Caco-2 (cell line): ENCODE measurements at regions of chr16 and their contacts with region 1.

Region 1: DNA sequence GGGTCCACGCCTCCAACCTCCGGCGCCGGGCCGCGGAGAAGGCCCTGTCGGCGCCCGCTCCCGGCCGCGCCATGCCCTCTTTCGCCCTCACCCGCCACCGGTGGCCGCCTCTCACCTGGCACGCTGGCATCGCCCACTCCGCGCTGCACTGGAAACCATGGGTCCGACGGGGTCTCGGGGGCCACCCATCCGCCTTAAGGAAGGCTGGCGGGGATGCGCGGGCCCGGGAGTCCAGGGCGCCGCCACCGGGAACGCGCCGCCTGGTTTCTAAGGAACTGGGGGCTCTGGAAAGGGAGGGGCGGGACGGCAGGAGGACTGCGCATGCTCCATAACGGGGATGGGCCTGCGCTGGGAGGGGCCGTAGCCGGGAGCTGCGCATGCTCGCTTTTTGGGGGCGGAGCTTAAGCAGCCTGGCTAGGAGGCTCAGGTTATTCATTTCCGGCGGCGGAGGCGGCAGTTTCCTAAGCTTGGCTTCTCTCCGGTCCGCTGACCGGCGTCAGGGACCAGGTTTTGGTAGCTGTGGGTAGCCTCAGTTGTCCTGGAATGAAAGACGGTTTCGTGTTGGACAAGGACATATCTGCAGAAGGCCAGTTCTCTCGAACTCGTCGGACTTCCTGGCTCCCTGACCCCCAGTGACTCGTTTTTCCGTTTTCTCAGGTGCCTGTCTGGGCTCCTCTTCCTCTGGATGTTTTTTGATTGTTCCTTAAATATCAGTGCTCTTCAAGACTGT is at the start of gene GFOD2:
- DNase-seq: peak; percentile 97 to 99
- H3K4me3 ChIP-seq: peak within 1 kb of the TSS; percentile 84
- H3K4me3 Mint-ChIP-seq: peak within 1 kb of the TSS; percentile 89
- H3K27ac Mint-ChIP-seq: peak within 1 kb of the TSS; percentile 86
- H3K4me1 ChIP-seq: peaks cover 25% of the 10 kb centered on the region
- H3K4me1 Mint-ChIP-seq: peaks cover 20% of the 10 kb centered on the region
- H3K27me3 ChIP-seq: no peaks in the 10 kb centered on the region
- H3K27me3 Mint-ChIP-seq: no peaks in the 10 kb centered on the region
- CTCF ChIP-seq: no peak
- total RNA-seq, gene GFOD2: 12.7 and 13.4 TPM in 2 replicates

Region 2: DNA sequence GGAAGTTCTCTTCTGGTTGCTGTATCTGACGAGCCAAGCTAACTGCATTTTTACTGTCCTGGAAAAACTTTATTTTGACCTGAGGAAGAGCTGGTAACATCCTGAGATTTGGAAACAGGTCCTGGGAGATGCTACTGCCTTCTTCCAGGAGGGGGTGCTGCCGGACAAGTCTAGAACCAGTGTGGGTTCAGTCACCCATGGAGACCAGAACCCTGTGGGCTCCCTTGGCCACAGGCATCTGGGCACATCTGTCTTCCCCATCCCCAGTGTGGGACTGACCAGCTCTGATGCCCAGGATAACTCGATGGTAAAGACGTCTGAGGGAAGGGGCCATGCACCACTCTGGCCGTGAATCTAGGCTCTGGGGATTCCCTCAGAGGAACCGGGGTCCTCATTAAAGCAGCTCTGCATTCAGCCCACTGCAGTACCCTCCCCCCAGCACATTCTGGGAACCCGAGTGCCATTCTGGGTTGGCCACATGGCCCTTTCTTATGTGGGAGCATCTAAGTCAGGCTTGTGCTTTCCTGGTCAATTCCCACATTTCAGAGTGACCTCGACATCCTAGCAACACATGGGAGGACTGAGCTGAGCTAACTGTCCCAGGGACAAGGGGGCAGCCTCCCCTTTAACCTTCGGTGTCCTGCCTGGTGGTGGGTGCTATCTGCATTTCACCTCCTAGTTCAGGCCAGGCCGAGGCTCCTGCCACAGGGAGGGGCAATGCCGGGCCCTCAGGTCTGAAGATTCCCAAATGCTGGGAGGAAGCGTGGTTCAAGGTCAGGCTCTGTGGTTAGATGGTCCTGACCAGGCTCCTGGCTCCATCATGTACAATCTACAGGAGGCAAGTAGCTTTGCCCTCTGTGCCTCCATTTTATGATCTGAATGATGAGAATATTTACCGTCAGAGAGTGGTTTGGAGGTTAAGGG is 46.2 kb before region 1 on chr16:
- CTCF ChIA-PET with region 1: interaction called, 18 read pairs
- POLR2A ChIA-PET with region 1: interaction called, 3 read pairs
- intact Hi-C with region 1: loop called (anchors 1 kb)
- DNase-seq: peak; percentile 80 to 87
- H3K4me3 ChIP-seq: no peak overlapping the region
- H3K4me3 Mint-ChIP-seq: no peak overlapping the region
- H3K27ac Mint-ChIP-seq: no peak overlapping the region
- H3K4me1 ChIP-seq: peaks cover 8% of the 10 kb centered on the region
- H3K4me1 Mint-ChIP-seq: peaks cover 4% of the 10 kb centered on the region
- H3K27me3 ChIP-seq: no peaks in the 10 kb centered on the region
- H3K27me3 Mint-ChIP-seq: no peaks in the 10 kb centered on the region
- CTCF ChIP-seq: peak; percentile 91 to 94

Region 3: GRCh38 chr16:67685388-67686112 is 33.7 kb before region 1 on chr16:
- CTCF ChIA-PET with region 1: no interaction called
- POLR2A ChIA-PET with region 1: no interaction called
- intact Hi-C with region 1: no loop called
- DNase-seq: no peak
- H3K4me3 ChIP-seq: no peak overlapping the region
- H3K4me3 Mint-ChIP-seq: no peak overlapping the region
- H3K27ac Mint-ChIP-seq: no peak overlapping the region
- H3K4me1 ChIP-seq: no peaks in the 10 kb centered on the region
- H3K4me1 Mint-ChIP-seq: no peaks in the 10 kb centered on the region
- H3K27me3 ChIP-seq: no peaks in the 10 kb centered on the region
- H3K27me3 Mint-ChIP-seq: no peaks in the 10 kb centered on the region
- CTCF ChIP-seq: no peak

Region 4: GRCh38 chr16:67697422-67698185 is 21.6 kb before region 1 on chr16:
- CTCF ChIA-PET with region 1: no interaction called
- POLR2A ChIA-PET with region 1: interaction called, 4 read pairs
- intact Hi-C with region 1: loop called (anchors 1 kb)
- DNase-seq: peak; percentile 54 to 56
- H3K4me3 ChIP-seq: no peak overlapping the region
- H3K4me3 Mint-ChIP-seq: no peak overlapping the region
- H3K27ac Mint-ChIP-seq: no peak overlapping the region
- H3K4me1 ChIP-seq: peaks cover 21% of the 10 kb centered on the region
- H3K4me1 Mint-ChIP-seq: peaks cover 16% of the 10 kb centered on the region
- H3K27me3 ChIP-seq: no peaks in the 10 kb centered on the region
- H3K27me3 Mint-ChIP-seq: no peaks in the 10 kb centered on the region
- CTCF ChIP-seq: no peak

Region 5: DNA sequence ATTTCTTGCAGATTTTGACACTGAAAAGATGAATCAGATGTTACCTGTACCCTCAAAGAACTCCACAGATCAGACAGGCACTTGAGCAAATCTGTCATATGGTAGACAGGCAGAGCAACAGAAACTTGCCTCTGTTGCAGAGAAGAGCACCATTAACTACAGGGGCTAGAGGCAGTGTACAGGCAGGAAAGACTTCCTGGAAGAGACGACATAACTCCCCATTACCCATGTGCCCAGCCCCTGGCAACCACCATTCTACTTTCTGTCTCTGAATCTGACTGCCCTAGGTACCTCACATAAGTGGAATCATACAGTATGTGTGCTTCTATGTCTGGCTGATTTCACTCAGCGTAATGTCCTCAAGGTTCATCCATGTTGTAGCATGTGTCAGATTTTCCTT is 15.6 kb before region 1 on chr16:
- CTCF ChIA-PET with region 1: no interaction called
- POLR2A ChIA-PET with region 1: interaction called, 4 read pairs
- intact Hi-C with region 1: loop called (anchors 2 kb)
- DNase-seq: no peak
- H3K4me3 ChIP-seq: no peak overlapping the region
- H3K4me3 Mint-ChIP-seq: no peak overlapping the region
- H3K27ac Mint-ChIP-seq: no peak overlapping the region
- H3K4me1 ChIP-seq: peaks cover 3% of the 10 kb centered on the region
- H3K4me1 Mint-ChIP-seq: peaks cover 3% of the 10 kb centered on the region
- H3K27me3 ChIP-seq: no peaks in the 10 kb centered on the region
- H3K27me3 Mint-ChIP-seq: no peaks in the 10 kb centered on the region
- CTCF ChIP-seq: no peak

Region 6: DNA sequence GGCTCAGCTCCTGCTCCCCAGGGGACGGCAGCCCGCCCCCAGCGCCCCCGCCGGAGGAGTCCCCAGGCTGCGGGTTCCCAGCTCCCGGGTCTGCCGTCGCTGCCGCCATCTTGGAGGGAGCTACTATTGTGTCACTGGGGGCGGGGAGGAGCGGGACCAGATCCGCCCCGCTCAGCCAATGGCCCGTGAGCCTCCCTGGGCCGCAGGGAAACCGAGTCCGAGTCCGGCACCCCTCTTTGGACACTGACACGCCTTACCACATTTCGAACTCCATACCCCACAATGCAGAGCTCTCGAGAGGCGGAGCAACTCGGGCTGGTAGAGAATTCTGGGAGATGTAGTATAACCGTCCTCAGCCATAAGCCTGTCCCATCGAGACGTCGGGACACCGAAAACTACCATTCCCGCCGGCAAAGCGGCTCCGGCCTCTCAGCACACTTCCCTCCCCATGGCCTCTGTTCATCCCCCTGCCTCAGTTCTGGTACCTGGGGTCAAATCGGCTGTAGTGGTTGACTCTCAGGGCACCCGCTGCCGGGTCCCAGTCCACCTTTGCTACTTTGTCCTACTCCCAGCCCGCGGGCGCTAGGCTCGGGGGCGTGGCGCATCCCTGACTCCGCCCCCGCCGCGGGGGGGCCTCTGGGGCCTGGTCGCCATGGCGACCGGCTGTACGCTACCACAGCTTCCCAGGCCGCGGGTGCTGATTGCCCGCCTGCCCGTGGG is 87.4 kb after region 1 on chr16 and contains the starts of genes RANBP10 and TSNAXIP1:
- CTCF ChIA-PET with region 1: interaction called, 8 read pairs
- POLR2A ChIA-PET with region 1: interaction called, 18 read pairs
- intact Hi-C with region 1: loop called (anchors 1 kb)
- DNase-seq: peak; percentile 99
- H3K4me3 ChIP-seq: peak within 1 kb of the TSS; percentile 88
- H3K4me3 Mint-ChIP-seq: peak within 1 kb of the TSS; percentile 83
- H3K27ac Mint-ChIP-seq: peak within 1 kb of the TSS; percentile 81
- H3K4me1 ChIP-seq: peaks cover 10% of the 10 kb centered on the region; the same call in 1 of the 2 replicates
- H3K4me1 Mint-ChIP-seq: peaks cover 9% of the 10 kb centered on the region
- H3K27me3 ChIP-seq: no peaks in the 10 kb centered on the region
- H3K27me3 Mint-ChIP-seq: no peaks in the 10 kb centered on the region
- CTCF ChIP-seq: no peak
- total RNA-seq, gene RANBP10: 21.8 and 23.8 TPM in 2 replicates
- total RNA-seq, gene TSNAXIP1: 0.84 and 0.91 TPM in 2 replicates

Region 7: GRCh38 chr16:68084492-68085258 is 365.5 kb after region 1 on chr16:
- CTCF ChIA-PET with region 1: no interaction called
- POLR2A ChIA-PET with region 1: no interaction called
- intact Hi-C with region 1: no loop called
- DNase-seq: peak; percentile 93 to 94
- H3K4me3 ChIP-seq: peak overlapping the region; percentile 87
- H3K4me3 Mint-ChIP-seq: peak overlapping the region; percentile 71
- H3K27ac Mint-ChIP-seq: peak overlapping the region; percentile 66
- H3K4me1 ChIP-seq: peaks cover 28% of the 10 kb centered on the region
- H3K4me1 Mint-ChIP-seq: peaks cover 35% of the 10 kb centered on the region
- H3K27me3 ChIP-seq: no peaks in the 10 kb centered on the region
- H3K27me3 Mint-ChIP-seq: no peaks in the 10 kb centered on the region
- CTCF ChIP-seq: peak in 1 of 2 experiments; percentile 8